ENCODE measurements at regions of chr14 and their contacts with region 1.

Region 1: GRCh38 chr14:93115069-93115820 is 480 bp downstream of the ITPK1 start:
- DNase-seq: peak; percentile 70 to 80
- ATAC-seq: peak; percentile 84 to 86
- H3K4me3 ChIP-seq: peak overlapping the region; percentile 76
- H3K27ac ChIP-seq: peak overlapping the region; percentile 96 to 100
- H3K4me1 ChIP-seq: peaks cover 20% of the 10 kb centered on the region
- CTCF ChIP-seq: no peak
- EP300 ChIP-seq: no peak
- POLR2A ChIP-seq: peak; percentile 40; the same call in 1 of the 2 replicates
- RAD21 ChIP-seq: 0 out of 5 replicates have a peak, but pooled peaks of 1 of the 2 experiments have one; percentile 11

Region 2: GRCh38 chr14:92945959-92946846 is 169.0 kb before region 1 on chr14:
- CTCF ChIA-PET with region 1: interaction called, 76 read pairs
- POLR2A ChIA-PET with region 1: no interaction called
- DNase-seq: peak; percentile 39 to 91
- ATAC-seq: peak; percentile 62 to 87
- H3K4me3 ChIP-seq: no peak overlapping the region
- H3K27ac ChIP-seq: peak overlapping the region; percentile 59 to 88
- H3K4me1 ChIP-seq: peaks cover 20% of the 10 kb centered on the region
- CTCF ChIP-seq: no peak
- EP300 ChIP-seq: no peak
- POLR2A ChIP-seq: no peak
- RAD21 ChIP-seq: no peak

Region 3: GRCh38 chr14:92973798-92974399 is 141.3 kb before region 1 on chr14:
- CTCF ChIA-PET with region 1: interaction called, 10 read pairs
- POLR2A ChIA-PET with region 1: no interaction called
- DNase-seq: no peak
- ATAC-seq: no peak
- H3K4me3 ChIP-seq: no peak overlapping the region
- H3K27ac ChIP-seq: no peak overlapping the region
- H3K4me1 ChIP-seq: no peaks in the 10 kb centered on the region
- CTCF ChIP-seq: no peak
- EP300 ChIP-seq: no peak
- POLR2A ChIP-seq: no peak
- RAD21 ChIP-seq: no peak

Region 4: GRCh38 chr14:93103392-93104080 is 11.7 kb before region 1 on chr14:
- CTCF ChIA-PET with region 1: interaction called, 148 read pairs
- POLR2A ChIA-PET with region 1: interaction called, 3 read pairs
- DNase-seq: no peak
- ATAC-seq: no peak
- H3K4me3 ChIP-seq: no peak overlapping the region
- H3K27ac ChIP-seq: 0 out of 6 replicates have a peak overlapping the region, but pooled peaks of 1 of the 2 experiments have one; percentile 23
- H3K4me1 ChIP-seq: peaks cover 18% of the 10 kb centered on the region
- CTCF ChIP-seq: no peak
- EP300 ChIP-seq: no peak
- POLR2A ChIP-seq: no peak
- RAD21 ChIP-seq: no peak

Region 5: DNA sequence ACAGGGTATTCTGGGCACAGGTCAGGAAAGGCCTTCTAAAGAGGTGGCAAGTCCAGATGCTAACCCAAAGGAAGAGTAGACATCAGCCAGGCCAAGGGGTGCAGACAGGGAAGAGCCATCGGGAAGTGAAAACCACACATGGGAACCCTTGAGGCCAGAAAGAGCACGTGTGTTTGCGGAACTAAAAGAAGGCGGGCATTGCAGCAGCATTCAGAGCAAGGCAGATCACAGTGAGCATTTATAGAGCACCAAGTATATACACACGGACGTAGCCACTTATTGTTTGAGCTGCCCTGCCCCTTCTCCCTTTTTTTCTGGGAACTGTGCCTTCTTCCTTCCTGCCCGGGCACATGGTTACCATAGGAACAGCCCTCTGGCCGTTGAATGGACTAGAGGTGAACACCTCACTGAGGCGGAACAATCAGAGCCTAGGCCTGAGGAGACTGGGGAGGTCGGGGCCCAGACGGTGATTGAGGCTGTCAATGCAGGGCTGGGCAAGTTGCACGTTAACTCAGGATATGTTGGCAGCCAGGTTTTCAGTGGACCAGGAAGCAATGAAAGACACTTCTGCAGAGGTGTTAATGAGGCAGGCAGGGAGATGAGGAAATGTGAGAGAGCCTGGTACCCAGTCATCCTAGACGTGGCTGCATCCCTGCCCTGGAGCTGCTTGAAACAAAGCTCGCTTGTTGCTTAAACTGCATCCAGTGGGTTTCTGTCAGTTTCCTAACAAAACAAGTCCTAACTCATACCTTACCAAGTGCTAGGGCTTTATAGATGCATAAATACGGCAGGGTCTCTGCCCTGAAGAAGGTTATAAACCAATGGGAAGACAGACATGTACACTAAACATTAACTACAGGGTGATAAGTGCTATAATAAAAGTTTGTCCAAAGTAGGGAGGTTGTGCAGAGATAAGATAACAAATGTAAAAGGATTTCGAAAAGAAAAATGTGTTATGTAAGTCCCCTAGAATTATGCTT is 35.3 kb after region 1 on chr14:
- CTCF ChIA-PET with region 1: interaction called, 27 read pairs
- POLR2A ChIA-PET with region 1: no interaction called
- DNase-seq: no peak
- ATAC-seq: peak; percentile 32 to 68; a peak in 4 of 6 replicates
- H3K4me3 ChIP-seq: no peak overlapping the region
- H3K27ac ChIP-seq: no peak overlapping the region
- H3K4me1 ChIP-seq: peaks cover 8% of the 10 kb centered on the region; the same call in 1 of the 3 replicates
- CTCF ChIP-seq: no peak
- EP300 ChIP-seq: no peak
- POLR2A ChIP-seq: no peak
- RAD21 ChIP-seq: no peak

Region 6: GRCh38 chr14:93173943-93174395 is 58.7 kb after region 1 on chr14:
- CTCF ChIA-PET with region 1: interaction called, 47 read pairs
- POLR2A ChIA-PET with region 1: no interaction called
- DNase-seq: no peak
- ATAC-seq: peak; percentile 35 to 55; a peak in 3 of 6 replicates
- H3K4me3 ChIP-seq: no peak overlapping the region
- H3K27ac ChIP-seq: no peak overlapping the region
- H3K4me1 ChIP-seq: peaks cover 7% of the 10 kb centered on the region; the same call in 1 of the 3 replicates
- CTCF ChIP-seq: no peak
- EP300 ChIP-seq: no peak
- POLR2A ChIP-seq: no peak
- RAD21 ChIP-seq: no peak